T-cell (primary cell): ENCODE measurements at regions of chr3 and their contacts with region 1.

Region 1: DNA sequence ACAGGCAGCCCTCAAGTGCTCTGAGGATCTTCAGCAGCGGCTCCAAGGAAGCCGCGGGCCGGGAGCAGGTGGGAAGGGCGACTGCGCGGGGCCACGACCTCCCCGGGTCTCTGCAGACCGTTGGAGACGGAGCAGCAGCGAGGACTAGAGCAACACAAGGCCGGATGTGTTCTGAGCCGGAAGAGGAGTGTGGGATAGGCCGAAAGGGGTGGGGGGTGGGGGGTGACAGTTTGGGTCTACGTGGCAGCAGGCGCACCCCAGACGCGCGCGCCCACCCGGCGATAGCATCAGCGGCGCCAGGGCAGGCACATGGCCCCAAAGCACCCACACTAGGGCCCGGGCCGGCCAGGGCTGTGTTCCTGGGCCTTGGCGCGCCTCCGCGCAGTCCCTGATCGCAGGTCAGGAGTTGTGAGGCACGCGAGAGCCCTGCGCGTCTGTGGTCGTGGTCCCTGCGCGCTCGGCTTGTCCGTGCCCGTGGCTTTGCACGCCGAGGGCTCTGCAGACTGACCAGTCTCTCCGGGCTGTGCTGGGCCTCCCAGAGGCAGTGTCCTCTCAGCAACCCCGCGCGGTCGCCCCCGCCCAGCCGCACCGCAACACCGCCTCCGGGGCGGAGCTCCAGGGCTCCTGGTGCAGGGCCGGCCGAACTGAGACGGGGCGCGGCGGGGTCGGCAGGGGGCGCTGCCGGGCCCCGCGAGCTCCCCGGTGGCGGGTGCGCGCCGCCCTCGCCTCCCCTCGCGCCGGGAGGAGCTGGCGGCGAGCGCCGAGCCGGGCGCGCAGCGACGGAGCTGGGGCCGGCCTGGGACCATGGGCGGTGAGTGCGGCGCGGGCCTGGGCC is at the start of gene PXYLP1:
- DNase-seq: peak; percentile 74 to 94 (median 85)
- ATAC-seq: peak; percentile 91 to 95 (median 92)
- H3K4me3 ChIP-seq: peak within 1 kb of the TSS; percentile 84 to 88
- H3K4me3 Mint-ChIP-seq: peak within 1 kb of the TSS; percentile 84 to 97 (median 92)
- H3K27ac ChIP-seq: peak within 1 kb of the TSS; percentile 82
- H3K27ac Mint-ChIP-seq: peak within 1 kb of the TSS; percentile 99
- H3K4me1 ChIP-seq: peaks cover 13 to 51% of the 10 kb centered on the region in 2 experiments
- H3K4me1 Mint-ChIP-seq: peaks cover 52 to 61% (median 54%) of the 10 kb centered on the region in 3 donors
- H3K27me3 ChIP-seq: no peaks in the 10 kb centered on the region
- H3K27me3 Mint-ChIP-seq: no peaks in the 10 kb centered on the region
- total RNA-seq, gene PXYLP1: 12.5 to 33.0 (median 14.6) TPM

Region 2: DNA sequence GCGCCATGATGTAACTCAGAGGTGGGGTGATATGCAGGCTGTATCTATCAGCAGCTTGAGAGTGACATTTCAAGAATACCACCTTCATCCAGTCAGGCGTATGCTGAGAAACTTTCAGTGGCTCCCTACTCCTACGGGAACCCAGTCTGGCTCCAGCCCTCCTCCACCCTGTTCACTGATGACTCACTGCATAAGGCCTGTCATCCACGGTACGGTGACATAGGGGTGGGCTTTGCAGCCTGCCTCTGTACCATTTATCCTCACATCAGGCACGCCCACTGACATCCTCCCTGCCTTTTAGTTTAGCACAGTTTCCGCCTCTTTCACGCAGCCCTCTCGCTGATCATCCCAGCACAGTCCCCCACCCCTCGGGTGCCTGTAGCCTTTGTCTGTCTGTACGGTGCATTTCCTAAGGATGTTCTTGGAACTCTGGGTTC is 12.0 kb after region 1 on chr3:
- CTCF ChIA-PET with region 1: interaction called, 6 to 8 read pairs
- POLR2A ChIA-PET with region 1: interaction called, 3 to 10 read pairs
- DNase-seq: peak; percentile 25 to 76 (median 60)
- ATAC-seq: peak; percentile 96 to 100 (median 99)
- H3K4me3 ChIP-seq: no peak overlapping the region
- H3K4me3 Mint-ChIP-seq: peak overlapping the region; percentile 17 to 67 (median 41)
- H3K27ac ChIP-seq: peak overlapping the region; percentile 50
- H3K27ac Mint-ChIP-seq: peak overlapping the region; percentile 79 to 89
- H3K4me1 ChIP-seq: peaks cover 14 to 31% of the 10 kb centered on the region in 2 experiments
- H3K4me1 Mint-ChIP-seq: peaks cover 37 to 52% (median 39%) of the 10 kb centered on the region in 3 donors
- H3K27me3 ChIP-seq: no peaks in the 10 kb centered on the region
- H3K27me3 Mint-ChIP-seq: no peaks in the 10 kb centered on the region

Region 3: GRCh38 chr3:141255846-141256261 is 24.5 kb after region 1 on chr3:
- CTCF ChIA-PET with region 1: interaction called, 15 to 23 read pairs
- POLR2A ChIA-PET with region 1: interaction called in 1 of 2 experiments, 4 read pairs
- DNase-seq: peak in 25 of 35 experiments; percentile 13 to 75 (median 40)
- ATAC-seq: peak; percentile 96 to 99 (median 96)
- H3K4me3 ChIP-seq: no peak overlapping the region
- H3K4me3 Mint-ChIP-seq: peak overlapping the region in 2 of 3 donors; percentile 4 to 18
- H3K27ac ChIP-seq: no peak overlapping the region
- H3K27ac Mint-ChIP-seq: peak overlapping the region; percentile 39 to 79
- H3K4me1 ChIP-seq: peaks cover 0 to 12% of the 10 kb centered on the region in 2 experiments
- H3K4me1 Mint-ChIP-seq: peaks cover 19 to 51% (median 51%) of the 10 kb centered on the region in 3 donors
- H3K27me3 ChIP-seq: no peaks in the 10 kb centered on the region
- H3K27me3 Mint-ChIP-seq: no peaks in the 10 kb centered on the region

Region 4: GRCh38 chr3:141266797-141267555 is 35.7 kb after region 1 on chr3:
- CTCF ChIA-PET with region 1: interaction called, 5 to 32 read pairs
- POLR2A ChIA-PET with region 1: interaction called in 1 of 2 experiments, 4 read pairs
- DNase-seq: peak; percentile 10 to 73 (median 43)
- ATAC-seq: peak; percentile 85 to 94 (median 90)
- H3K4me3 ChIP-seq: peak overlapping the region; percentile 45 to 50
- H3K4me3 Mint-ChIP-seq: peak overlapping the region; percentile 81 to 90 (median 89)
- H3K27ac ChIP-seq: peak overlapping the region; percentile 84
- H3K27ac Mint-ChIP-seq: peak overlapping the region; percentile 97
- H3K4me1 ChIP-seq: peaks cover 15 to 30% of the 10 kb centered on the region in 2 experiments
- H3K4me1 Mint-ChIP-seq: peaks cover 37 to 64% (median 61%) of the 10 kb centered on the region in 3 donors
- H3K27me3 ChIP-seq: no peaks in the 10 kb centered on the region
- H3K27me3 Mint-ChIP-seq: no peaks in the 10 kb centered on the region

Region 5: DNA sequence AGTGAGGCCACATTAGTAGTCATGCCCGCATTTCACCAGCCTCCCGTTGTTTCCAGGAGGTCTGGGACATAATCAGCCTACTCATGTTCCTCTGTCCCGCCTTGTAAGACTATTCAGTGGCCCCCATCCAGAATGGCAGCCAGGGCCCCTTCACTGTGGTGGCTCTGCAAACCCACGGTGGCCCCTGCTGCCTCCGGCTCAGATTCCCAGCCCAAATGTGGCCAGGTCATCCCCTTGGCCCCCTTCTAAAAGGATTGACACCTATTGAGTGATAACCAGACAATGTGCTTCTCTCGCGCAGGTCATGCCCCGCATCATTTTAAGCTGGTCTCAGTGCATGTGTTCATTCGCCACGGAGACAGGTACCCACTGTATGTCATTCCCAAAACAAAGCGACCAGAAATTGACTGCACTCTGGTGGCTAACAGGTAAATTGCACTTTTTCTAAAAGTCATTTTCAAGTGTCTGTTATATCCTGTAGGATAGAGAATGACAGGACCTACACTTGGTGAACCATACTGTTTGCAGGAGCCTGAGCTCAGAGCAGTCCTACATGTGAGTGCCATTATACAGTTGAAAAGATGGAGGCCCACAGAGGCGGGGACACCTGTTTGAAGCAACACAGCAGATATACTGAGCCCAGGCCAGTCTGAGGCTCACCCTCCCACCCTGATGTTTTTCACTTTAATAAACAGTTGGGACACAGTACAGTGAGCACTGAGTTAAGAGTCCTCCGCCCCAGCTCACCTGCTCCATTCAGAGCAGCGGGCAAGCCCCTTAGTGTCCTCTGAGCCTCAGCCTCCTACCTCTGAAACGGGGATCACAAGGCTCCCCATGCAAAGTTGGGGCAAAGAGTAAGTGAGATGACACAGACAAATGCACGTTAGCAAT is 48.0 kb after region 1 on chr3:
- CTCF ChIA-PET with region 1: interaction called, 10 to 12 read pairs
- POLR2A ChIA-PET with region 1: no interaction called
- DNase-seq: peak in 3 of 35 experiments; percentile 11 to 58 (median 19)
- ATAC-seq: peak; percentile 68 to 83 (median 76)
- H3K4me3 ChIP-seq: no peak overlapping the region
- H3K4me3 Mint-ChIP-seq: no peak overlapping the region
- H3K27ac ChIP-seq: no peak overlapping the region
- H3K27ac Mint-ChIP-seq: peak overlapping the region in 1 of 2 donors; percentile 53
- H3K4me1 ChIP-seq: peaks cover 0 to 19% of the 10 kb centered on the region in 2 experiments
- H3K4me1 Mint-ChIP-seq: peaks cover 18 to 23% (median 23%) of the 10 kb centered on the region in 3 donors
- H3K27me3 ChIP-seq: no peaks in the 10 kb centered on the region
- H3K27me3 Mint-ChIP-seq: no peaks in the 10 kb centered on the region

Region 6: GRCh38 chr3:141311496-141312353 is 80.4 kb after region 1 on chr3:
- CTCF ChIA-PET with region 1: interaction called, 3 to 10 read pairs
- POLR2A ChIA-PET with region 1: interaction called in 1 of 2 experiments, 6 read pairs
- DNase-seq: peak; percentile 94 to 98 (median 96)
- ATAC-seq: peak; percentile 88 to 94 (median 92)
- H3K4me3 ChIP-seq: peak overlapping the region; percentile 92 to 96
- H3K4me3 Mint-ChIP-seq: peak overlapping the region; percentile 93 to 100 (median 99)
- H3K27ac ChIP-seq: peak overlapping the region; percentile 74
- H3K27ac Mint-ChIP-seq: peak overlapping the region; percentile 99
- H3K4me1 ChIP-seq: peaks cover 30 to 50% of the 10 kb centered on the region in 2 experiments
- H3K4me1 Mint-ChIP-seq: peaks cover 57 to 59% (median 58%) of the 10 kb centered on the region in 3 donors
- H3K27me3 ChIP-seq: no peaks in the 10 kb centered on the region
- H3K27me3 Mint-ChIP-seq: no peaks in the 10 kb centered on the region

Region 7: DNA sequence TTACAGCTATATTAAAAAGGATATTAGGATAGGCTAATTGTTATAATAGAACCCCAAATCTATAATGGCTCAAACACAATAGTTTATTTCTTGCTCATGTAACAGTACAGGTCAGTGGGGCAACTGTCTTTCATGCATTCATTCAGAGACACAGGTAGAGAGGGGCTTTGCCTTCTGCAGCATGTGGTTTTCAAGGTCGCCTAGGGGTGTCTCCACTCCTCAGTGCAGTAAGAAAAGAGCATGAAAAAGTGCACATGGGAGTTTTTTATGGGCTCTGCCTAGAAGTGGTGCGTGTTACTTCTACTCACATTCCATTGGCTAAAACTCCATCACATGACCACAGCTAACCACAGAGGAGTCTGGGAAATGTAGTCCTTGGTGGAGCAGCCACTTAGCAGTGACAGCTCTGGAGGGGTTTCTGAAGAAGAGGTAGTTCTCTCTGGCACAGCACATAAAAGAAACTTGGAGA is 138.8 kb after region 1 on chr3:
- CTCF ChIA-PET with region 1: no interaction called
- POLR2A ChIA-PET with region 1: no interaction called
- DNase-seq: peak in 34 of 35 experiments; percentile 23 to 92 (median 58)
- ATAC-seq: peak; percentile 99 to 100 (median 100)
- H3K4me3 ChIP-seq: no peak overlapping the region
- H3K4me3 Mint-ChIP-seq: no peak overlapping the region
- H3K27ac ChIP-seq: no peak overlapping the region
- H3K27ac Mint-ChIP-seq: peak overlapping the region; percentile 4 to 37
- H3K4me1 ChIP-seq: no peaks in the 10 kb centered on the region
- H3K4me1 Mint-ChIP-seq: peaks cover under 1 to 7% (median 5%) of the 10 kb centered on the region in 3 donors
- H3K27me3 ChIP-seq: no peaks in the 10 kb centered on the region
- H3K27me3 Mint-ChIP-seq: no peaks in the 10 kb centered on the region